Activated CD8-positive, alpha-beta T cell treated with anti-CD3 and anti-CD28 coated beads, Interleukin-2, amount 10 ng/mL, durations not matched to agents 7 days and 5 days (primary cell): ENCODE measurements at regions of chr4 and their contacts with region 1.

Region 1: GRCh38 chr4:145180298-145181090 is at the start of gene OTUD4:
- DNase-seq: peak; percentile 96
- ATAC-seq: peak; percentile 83
- H3K4me3 Mint-ChIP-seq: peak within 1 kb of the TSS; percentile 88
- H3K27ac Mint-ChIP-seq: peak within 1 kb of the TSS; percentile 96
- H3K4me1 Mint-ChIP-seq: peaks cover 33% of the 10 kb centered on the region
- H3K27me3 Mint-ChIP-seq: no peaks in the 10 kb centered on the region
- total RNA-seq, gene OTUD4: 39.4 to 43.6 TPM

Region 2: DNA sequence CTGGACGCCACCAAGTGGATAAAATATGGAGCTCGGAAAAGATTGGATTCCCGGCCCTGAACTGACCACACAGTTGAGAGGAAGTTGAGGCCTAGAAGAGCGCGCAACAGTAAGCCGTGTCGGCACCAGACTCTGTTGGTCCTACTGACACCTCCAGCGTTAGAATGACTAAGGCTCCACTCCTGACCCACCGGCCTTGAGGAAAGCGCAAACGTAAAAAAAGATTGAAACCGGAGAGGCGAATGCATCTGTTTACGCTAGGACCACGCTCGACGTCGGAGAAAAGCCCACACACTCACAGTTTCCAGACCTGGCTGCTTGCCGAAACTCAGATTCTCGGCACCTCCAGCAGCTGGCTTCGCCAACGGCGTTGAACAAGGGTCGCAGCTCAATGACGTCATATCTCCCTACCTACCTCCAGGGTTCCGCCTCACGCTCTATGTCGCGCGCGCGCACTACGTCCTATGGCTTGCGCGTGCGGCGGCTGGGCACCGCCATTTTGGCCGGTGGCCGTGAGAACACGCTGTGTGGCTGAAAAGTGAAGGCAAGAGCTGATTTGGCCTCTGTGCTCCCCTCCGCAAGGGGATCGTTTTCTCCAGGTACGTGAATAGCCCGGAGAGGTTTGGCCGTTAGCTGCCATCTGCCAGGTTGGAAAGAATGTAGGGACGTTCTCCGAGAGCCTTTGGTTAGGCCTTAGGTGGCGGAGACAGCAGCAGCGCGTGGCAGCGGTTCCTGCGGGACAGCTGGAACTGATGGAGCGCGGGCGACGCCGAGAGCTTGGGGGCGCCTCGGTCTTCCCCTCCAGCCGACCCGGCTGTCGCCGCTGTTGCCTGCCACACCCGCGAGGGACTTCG is 82.4 kb before region 1 on chr4 and contains the starts of genes ABCE1 and ANAPC10:
- CTCF ChIA-PET with region 1: interaction called, 7 read pairs
- POLR2A ChIA-PET with region 1: interaction called, 27 read pairs
- DNase-seq: peak; percentile 97
- ATAC-seq: peak; percentile 91
- H3K4me3 Mint-ChIP-seq: peak within 1 kb of the TSS; percentile 86
- H3K27ac Mint-ChIP-seq: peak within 1 kb of the TSS; percentile 94
- H3K4me1 Mint-ChIP-seq: peaks cover 24% of the 10 kb centered on the region
- H3K27me3 Mint-ChIP-seq: no peaks in the 10 kb centered on the region
- total RNA-seq, gene ABCE1: 72.9 to 75.0 TPM
- total RNA-seq, gene ANAPC10: 24.5 to 26.0 TPM

Region 3: GRCh38 chr4:145148980-145149379 is 31.5 kb before region 1 on chr4:
- CTCF ChIA-PET with region 1: no interaction called
- POLR2A ChIA-PET with region 1: no interaction called
- DNase-seq: no peak
- ATAC-seq: no peak
- H3K4me3 Mint-ChIP-seq: no peak overlapping the region
- H3K27ac Mint-ChIP-seq: no peak overlapping the region
- H3K4me1 Mint-ChIP-seq: peaks cover 4% of the 10 kb centered on the region
- H3K27me3 Mint-ChIP-seq: no peaks in the 10 kb centered on the region

Region 4: GRCh38 chr4:145167884-145168283 is 12.6 kb before region 1 on chr4:
- CTCF ChIA-PET with region 1: interaction called, 3 read pairs
- POLR2A ChIA-PET with region 1: interaction called, 11 read pairs
- DNase-seq: no peak
- ATAC-seq: no peak
- H3K4me3 Mint-ChIP-seq: no peak overlapping the region
- H3K27ac Mint-ChIP-seq: no peak overlapping the region
- H3K4me1 Mint-ChIP-seq: peaks cover 18% of the 10 kb centered on the region
- H3K27me3 Mint-ChIP-seq: no peaks in the 10 kb centered on the region

Region 5: DNA sequence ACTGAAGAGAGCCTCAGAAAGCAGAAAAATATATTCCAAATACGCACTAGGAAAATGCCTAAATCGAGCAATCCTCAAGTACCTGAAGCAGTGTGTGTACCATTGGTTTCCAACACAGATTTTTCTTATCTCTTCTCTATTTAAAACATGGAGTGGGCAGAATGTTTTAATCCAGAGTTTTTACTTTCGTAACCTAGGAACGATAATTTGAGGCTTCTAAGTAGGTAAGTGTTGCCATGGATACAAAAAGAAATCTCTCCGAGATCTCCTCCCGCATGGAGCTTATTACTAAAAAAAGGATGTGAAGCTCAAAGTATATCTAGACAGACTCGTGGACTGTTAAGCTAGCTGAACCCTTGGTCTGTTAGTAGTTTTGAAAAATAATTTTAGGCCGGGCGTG is 22.9 kb after region 1 on chr4:
- CTCF ChIA-PET with region 1: no interaction called
- POLR2A ChIA-PET with region 1: no interaction called
- DNase-seq: no peak
- ATAC-seq: no peak
- H3K4me3 Mint-ChIP-seq: no peak overlapping the region
- H3K27ac Mint-ChIP-seq: no peak overlapping the region
- H3K4me1 Mint-ChIP-seq: no peaks in the 10 kb centered on the region
- H3K27me3 Mint-ChIP-seq: peaks cover 5% of the 10 kb centered on the region

Region 6: GRCh38 chr4:145618932-145619638 is 438.6 kb after region 1 on chr4 and contains the start of gene MMAA:
- CTCF ChIA-PET with region 1: interaction called, 10 read pairs
- POLR2A ChIA-PET with region 1: interaction called, 5 read pairs
- DNase-seq: peak; percentile 96
- ATAC-seq: peak; percentile 98
- H3K4me3 Mint-ChIP-seq: peak within 1 kb of the TSS; percentile 91
- H3K27ac Mint-ChIP-seq: peak within 1 kb of the TSS; percentile 98
- H3K4me1 Mint-ChIP-seq: peaks cover 33% of the 10 kb centered on the region
- H3K27me3 Mint-ChIP-seq: peaks cover under 1% of the 10 kb centered on the region
- total RNA-seq, gene MMAA: 6.8 to 8.2 TPM